Esophagus muscularis mucosa (tissue), 4 donors: ENCODE measurements at regions of chr5 and their contacts with region 1.

Region 1: GRCh38 chr5:172973127-172973916 is 10.2 kb upstream of the ATP6V0E1 start:
- DNase-seq: no peak
- H3K4me3 ChIP-seq: no peak overlapping the region
- H3K27ac ChIP-seq: no peak overlapping the region
- H3K4me1 ChIP-seq: no peaks in the 10 kb centered on the region
- H3K27me3 ChIP-seq: no peaks in the 10 kb centered on the region
- CTCF ChIP-seq: no peak
- EP300 ChIP-seq: no peak
- POLR2A ChIP-seq: no peak

Region 2: DNA sequence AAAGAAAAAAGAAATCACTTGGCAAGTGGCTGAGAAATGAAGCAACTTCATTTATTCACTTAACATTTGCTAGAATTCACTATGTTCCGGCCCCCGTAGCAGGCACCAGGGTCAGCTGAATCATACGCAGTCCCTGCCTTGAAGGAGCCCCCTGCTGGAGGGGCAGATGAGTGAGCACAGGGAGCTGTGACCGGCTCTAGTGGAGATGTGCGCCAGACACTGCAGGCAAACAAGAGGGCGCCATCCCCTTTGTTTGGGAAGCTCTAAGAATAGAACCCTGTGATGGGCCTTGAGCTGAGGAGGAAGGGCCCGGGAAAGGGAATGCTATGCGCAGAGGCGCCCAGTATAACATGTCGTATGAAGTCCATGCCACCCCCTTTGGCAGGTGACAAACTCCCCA is 34.3 kb before region 1 on chr5:
- intact Hi-C with region 1: no loop called
- DNase-seq: no peak
- H3K4me3 ChIP-seq: no peak overlapping the region
- H3K27ac ChIP-seq: peak overlapping the region in 1 of 4 donors; percentile 0
- H3K4me1 ChIP-seq: peaks cover 3 to 10% (median 6%) of the 10 kb centered on the region in 4 donors
- H3K27me3 ChIP-seq: no peaks in the 10 kb centered on the region
- CTCF ChIP-seq: peak; percentile 15 to 36 (median 20)
- EP300 ChIP-seq: no peak
- POLR2A ChIP-seq: no peak

Region 3: GRCh38 chr5:173283318-173284288 is 310.3 kb after region 1 on chr5:
- intact Hi-C with region 1: loop called (anchors 10 kb)
- DNase-seq: no peak
- H3K4me3 ChIP-seq: peak overlapping the region; percentile 25 to 41 (median 34)
- H3K27ac ChIP-seq: no peak overlapping the region
- H3K4me1 ChIP-seq: peaks cover 10 to 13% (median 12%) of the 10 kb centered on the region in 4 donors
- H3K27me3 ChIP-seq: peaks cover 0 to 87% (median 6%) of the 10 kb centered on the region in 4 donors
- CTCF ChIP-seq: peak; percentile 68 to 74 (median 72)
- EP300 ChIP-seq: no peak
- POLR2A ChIP-seq: no peak